HEK293 (cell line): ENCODE measurements at regions of chr5 and their contacts with region 1.

Region 1: GRCh38 chr5:24110004-24110615 is 534.7 kb downstream of the CDH10 start:
- H3K4me3 ChIP-seq: no peak overlapping the region
- H3K27ac ChIP-seq: no peak overlapping the region
- H3K4me1 ChIP-seq: no peaks in the 10 kb centered on the region
- CTCF ChIP-seq: no peak

Region 2: DNA sequence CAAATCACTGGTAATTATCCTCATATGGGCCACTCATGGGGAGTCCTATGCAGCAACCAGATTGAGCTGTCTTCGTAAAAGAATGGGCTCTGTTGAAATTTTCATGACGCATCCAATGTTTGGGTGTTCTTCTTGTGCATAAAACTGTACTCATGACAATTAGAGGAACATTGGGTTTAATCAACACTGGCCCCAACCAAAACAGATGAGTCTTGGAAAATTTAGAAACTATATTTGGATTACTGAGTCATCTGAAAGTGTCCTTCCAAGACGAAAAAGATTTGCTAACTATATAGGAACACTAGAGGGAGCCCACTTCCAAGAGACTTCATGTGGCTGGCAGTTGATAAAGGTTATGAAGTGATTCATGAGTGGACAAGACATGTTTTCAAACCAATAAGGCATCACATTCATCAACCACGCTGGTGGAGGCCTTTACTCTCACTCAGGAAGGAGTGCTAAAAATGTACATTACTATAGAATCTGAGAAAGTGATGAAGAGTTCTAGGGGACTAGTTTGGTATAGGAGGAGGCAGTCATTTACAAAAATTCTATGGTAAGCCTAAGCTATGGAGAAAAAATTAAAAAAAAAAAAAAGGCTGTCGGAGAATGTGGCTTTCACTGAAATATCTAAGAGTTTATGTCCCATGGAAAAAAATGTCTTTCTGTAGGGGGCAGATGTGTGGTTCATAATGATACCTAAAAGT is 289.2 kb before region 1 on chr5:
- CTCF ChIA-PET with region 1: interaction called, 13 read pairs
- POLR2A ChIA-PET with region 1: no interaction called
- H3K4me3 ChIP-seq: no peak overlapping the region
- H3K27ac ChIP-seq: no peak overlapping the region
- H3K4me1 ChIP-seq: no peaks in the 10 kb centered on the region
- CTCF ChIP-seq: no peak

Region 3: GRCh38 chr5:23977997-23978396 is 132.1 kb before region 1 on chr5:
- CTCF ChIA-PET with region 1: interaction called, 20 read pairs
- POLR2A ChIA-PET with region 1: no interaction called
- H3K4me3 ChIP-seq: no peak overlapping the region
- H3K27ac ChIP-seq: no peak overlapping the region
- H3K4me1 ChIP-seq: no peaks in the 10 kb centered on the region
- CTCF ChIP-seq: no peak

Region 4: DNA sequence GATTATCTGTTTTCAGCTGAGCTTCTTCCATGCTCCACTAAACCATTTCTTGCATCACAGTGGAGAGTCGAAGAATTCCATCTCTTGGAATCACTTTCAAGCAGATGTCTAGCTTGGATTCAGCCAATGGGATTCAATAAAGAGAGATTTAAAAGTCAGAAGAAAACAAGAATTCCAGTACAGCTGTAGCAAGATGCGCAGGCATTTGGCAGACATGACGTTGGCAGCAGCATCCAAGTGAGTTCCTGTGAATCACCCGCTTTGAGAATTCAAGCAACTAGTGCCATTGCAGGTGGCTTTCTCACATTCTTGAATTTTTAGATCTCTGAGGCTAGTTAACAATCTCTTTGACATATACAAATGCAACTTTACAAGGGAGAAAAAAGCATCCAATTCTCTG is 67.7 kb after region 1 on chr5:
- CTCF ChIA-PET with region 1: no interaction called
- POLR2A ChIA-PET with region 1: no interaction called
- H3K4me3 ChIP-seq: no peak overlapping the region
- H3K27ac ChIP-seq: no peak overlapping the region
- H3K4me1 ChIP-seq: no peaks in the 10 kb centered on the region
- CTCF ChIP-seq: no peak

Region 5: DNA sequence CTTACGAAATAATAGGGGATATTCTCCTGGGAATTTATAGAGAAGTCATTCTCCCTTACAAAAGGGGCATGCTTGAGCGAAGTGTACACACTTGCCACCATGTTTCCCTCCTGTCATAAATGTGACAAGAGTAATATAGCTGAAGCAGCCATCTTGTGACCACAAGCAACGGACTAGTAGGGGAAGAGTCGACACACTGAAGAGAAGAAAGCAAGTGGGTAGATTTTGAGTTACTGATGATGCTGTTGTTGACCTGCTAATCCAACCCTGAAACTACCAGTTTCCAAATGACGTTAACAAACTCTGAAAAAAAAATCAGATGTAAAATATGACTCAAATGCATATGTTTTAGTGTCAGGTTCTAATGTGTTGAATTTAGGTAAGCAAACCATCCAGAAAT is 184.2 kb after region 1 on chr5:
- CTCF ChIA-PET with region 1: no interaction called
- POLR2A ChIA-PET with region 1: no interaction called
- H3K4me3 ChIP-seq: no peak overlapping the region
- H3K27ac ChIP-seq: no peak overlapping the region
- H3K4me1 ChIP-seq: no peaks in the 10 kb centered on the region
- CTCF ChIP-seq: no peak